ENCODE measurements at regions of chr3 and their contacts with region 1.

Region 1: GRCh38 chr3:143644370-143645089 is 203.7 kb downstream of the SLC9A9 start:
- DNase-seq: peak; percentile 47
- ATAC-seq: peak; percentile 84
- H3K4me3 ChIP-seq: no peak overlapping the region
- H3K27ac ChIP-seq: no peak overlapping the region
- H3K4me1 ChIP-seq: no peaks in the 10 kb centered on the region
- H3K27me3 ChIP-seq: no peaks in the 10 kb centered on the region
- CTCF ChIP-seq: peak; percentile 48 to 66 (median 63); a peak in 4 of 6 replicates
- POLR2A ChIP-seq: no peak
- RAD21 ChIP-seq: peak; percentile 81

Region 2: DNA sequence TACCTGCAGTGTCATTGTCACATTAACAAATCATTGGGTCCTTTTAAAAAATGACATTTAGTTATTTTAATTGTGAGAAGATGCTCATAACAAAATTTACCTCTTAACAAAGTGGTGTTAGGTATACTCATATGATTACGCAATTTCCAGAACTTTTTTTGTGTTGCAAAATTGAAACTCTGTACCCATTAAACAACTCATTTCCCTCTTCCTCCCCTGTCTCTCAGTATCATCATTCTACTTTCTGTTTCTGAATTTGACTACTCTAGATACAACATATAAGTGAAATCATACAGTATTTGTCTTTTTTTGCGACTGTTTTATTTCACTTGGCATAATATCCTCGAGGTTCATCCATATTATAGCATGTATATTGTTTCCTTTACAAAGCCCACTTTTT is 583.6 kb before region 1 on chr3:
- CTCF ChIA-PET with region 1: no interaction called
- POLR2A ChIA-PET with region 1: no interaction called
- RAD21 ChIA-PET with region 1: no interaction called
- intact Hi-C with region 1: loop called (anchors 10 kb)
- DNase-seq: no peak
- ATAC-seq: no peak
- H3K4me3 ChIP-seq: no peak overlapping the region
- H3K27ac ChIP-seq: no peak overlapping the region
- H3K4me1 ChIP-seq: no peaks in the 10 kb centered on the region
- H3K27me3 ChIP-seq: no peaks in the 10 kb centered on the region
- CTCF ChIP-seq: no peak
- POLR2A ChIP-seq: no peak
- RAD21 ChIP-seq: no peak

Region 3: DNA sequence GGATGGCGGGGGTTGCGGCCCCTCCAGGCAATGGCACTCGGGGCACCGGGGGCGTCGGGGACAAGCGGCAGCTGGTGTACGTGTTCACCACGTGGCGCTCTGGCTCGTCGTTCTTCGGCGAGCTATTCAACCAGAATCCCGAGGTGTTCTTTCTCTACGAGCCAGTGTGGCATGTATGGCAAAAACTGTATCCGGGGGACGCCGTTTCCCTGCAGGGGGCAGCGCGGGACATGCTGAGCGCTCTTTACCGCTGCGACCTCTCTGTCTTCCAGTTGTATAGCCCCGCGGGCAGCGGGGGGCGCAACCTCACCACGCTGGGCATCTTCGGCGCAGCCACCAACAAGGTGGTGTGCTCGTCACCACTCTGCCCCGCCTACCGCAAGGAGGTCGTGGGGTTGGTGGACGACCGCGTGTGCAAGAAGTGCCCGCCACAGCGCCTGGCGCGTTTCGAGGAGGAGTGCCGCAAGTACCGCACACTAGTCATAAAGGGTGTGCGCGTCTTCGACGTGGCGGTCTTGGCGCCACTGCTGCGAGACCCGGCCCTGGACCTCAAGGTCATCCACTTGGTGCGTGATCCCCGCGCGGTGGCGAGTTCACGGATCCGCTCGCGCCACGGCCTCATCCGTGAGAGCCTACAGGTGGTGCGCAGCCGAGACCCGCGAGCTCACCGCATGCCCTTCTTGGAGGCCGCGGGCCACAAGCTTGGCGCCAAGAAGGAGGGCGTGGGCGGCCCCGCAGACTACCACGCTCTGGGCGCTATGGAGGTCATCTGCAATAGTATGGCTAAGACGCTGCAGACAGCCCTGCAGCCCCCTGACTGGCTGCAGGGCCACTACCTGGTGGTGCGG is 523.1 kb before region 1 on chr3:
- CTCF ChIA-PET with region 1: no interaction called
- POLR2A ChIA-PET with region 1: no interaction called
- RAD21 ChIA-PET with region 1: no interaction called
- intact Hi-C with region 1: loop called (anchors 2 kb)
- DNase-seq: no peak
- ATAC-seq: 0 out of 2 replicates have a peak, but pooled peaks have one; percentile 12
- H3K4me3 ChIP-seq: no peak overlapping the region
- H3K27ac ChIP-seq: no peak overlapping the region
- H3K4me1 ChIP-seq: no peaks in the 10 kb centered on the region; a peak in 1 of 4 replicates
- H3K27me3 ChIP-seq: peaks cover 3% of the 10 kb centered on the region; the same call in 1 of the 2 replicates
- CTCF ChIP-seq: peak; percentile 38 to 49 (median 47); a peak in 5 of 6 replicates
- POLR2A ChIP-seq: no peak
- RAD21 ChIP-seq: peak; percentile 54

Region 4: GRCh38 chr3:143433787-143434378 is 210.6 kb before region 1 on chr3:
- CTCF ChIA-PET with region 1: interaction called, 7 read pairs
- POLR2A ChIA-PET with region 1: no interaction called
- RAD21 ChIA-PET with region 1: no interaction called
- intact Hi-C with region 1: loop called (anchors 2 kb)
- DNase-seq: peak; percentile 8
- ATAC-seq: no peak
- H3K4me3 ChIP-seq: no peak overlapping the region
- H3K27ac ChIP-seq: no peak overlapping the region
- H3K4me1 ChIP-seq: no peaks in the 10 kb centered on the region
- H3K27me3 ChIP-seq: no peaks in the 10 kb centered on the region
- CTCF ChIP-seq: peak; percentile 45 to 79 (median 69); a peak in 5 of 6 replicates
- POLR2A ChIP-seq: no peak
- RAD21 ChIP-seq: peak; percentile 63